HCT116 (cell line): ENCODE measurements at regions of chr4 and their contacts with region 1.

Region 1: DNA sequence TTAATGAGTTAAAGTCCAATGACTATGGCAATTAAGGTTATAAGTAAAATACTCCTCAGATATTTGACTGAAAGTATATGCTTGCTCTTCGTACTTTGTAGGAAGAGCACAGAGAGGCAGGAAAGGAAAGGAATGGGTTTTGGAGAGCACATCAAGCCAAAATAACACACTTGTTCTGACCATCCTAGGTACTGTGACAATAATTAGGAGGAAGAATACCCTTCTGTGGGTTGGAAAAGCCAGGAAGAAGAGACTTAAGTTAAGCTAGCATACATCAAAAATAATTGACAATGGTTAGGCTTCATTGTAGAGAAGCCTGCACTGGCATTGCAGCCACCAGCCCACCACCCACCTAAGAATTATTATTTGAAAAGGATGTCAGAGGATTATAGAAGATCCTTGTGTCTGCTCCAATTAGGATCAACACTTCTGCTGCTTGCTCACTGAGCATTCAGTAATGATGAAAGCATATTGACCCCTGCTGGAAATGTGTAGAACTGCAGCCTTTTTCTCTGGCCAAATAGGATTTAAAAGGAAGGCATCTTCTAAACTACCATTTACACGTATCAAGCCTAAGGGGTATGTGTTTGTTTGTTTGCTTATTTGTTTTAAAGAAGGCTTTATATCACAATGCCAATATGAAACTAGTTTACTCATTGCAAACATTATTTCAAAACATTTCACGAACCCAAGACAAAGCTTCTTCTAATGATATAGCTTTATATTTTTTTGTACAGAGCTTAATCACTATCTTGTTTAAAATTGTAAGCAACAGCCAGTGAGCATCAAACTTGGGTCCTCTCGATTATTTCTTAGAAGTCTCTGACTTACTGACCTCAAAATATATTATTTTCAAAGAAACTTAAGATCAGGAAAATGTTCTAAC is 286.2 kb upstream of the TET2 start:
- DNase-seq: peak; percentile 76
- ATAC-seq: peak; percentile 78
- H3K4me3 ChIP-seq: no peak overlapping the region
- H3K27ac ChIP-seq: no peak overlapping the region
- H3K4me1 ChIP-seq: no peaks in the 10 kb centered on the region
- H3K27me3 ChIP-seq: no peaks in the 10 kb centered on the region
- CTCF ChIP-seq: peak; percentile 69 to 92 (median 74); a peak in 5 of 6 replicates
- POLR2A ChIP-seq: no peak
- RAD21 ChIP-seq: peak; percentile 92

Region 2: DNA sequence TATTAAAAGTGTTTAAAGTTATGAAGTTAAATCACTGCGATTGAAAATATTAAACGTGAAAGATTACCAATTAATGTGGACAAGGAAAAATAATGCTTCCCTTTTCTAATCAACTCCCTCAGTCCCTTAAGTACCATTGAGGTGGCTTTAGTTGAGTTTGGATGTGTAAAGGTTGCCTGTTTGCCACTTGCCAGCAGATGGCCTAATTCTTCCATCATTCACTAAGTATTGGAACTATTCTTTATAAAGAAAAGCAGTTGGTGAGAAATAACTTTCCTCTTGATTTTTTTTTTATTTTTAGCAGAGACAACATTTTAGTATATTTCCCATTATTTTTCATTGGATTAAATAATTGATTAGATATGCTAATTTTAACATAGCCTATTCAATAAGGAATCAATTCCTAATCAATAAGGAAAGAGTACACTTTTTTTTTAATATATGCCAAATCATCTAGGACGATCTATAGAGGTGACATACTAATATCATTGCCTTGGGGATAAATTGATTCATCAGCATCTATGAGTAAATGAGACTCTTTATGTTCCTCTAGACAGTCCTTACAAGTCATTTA is 844.7 kb before region 1 on chr4:
- CTCF ChIA-PET with region 1: no interaction called
- POLR2A ChIA-PET with region 1: no interaction called
- RAD21 ChIA-PET with region 1: no interaction called
- intact Hi-C with region 1: loop called (anchors 2 kb)
- DNase-seq: peak; percentile 28
- ATAC-seq: peak; percentile 63; the same call in 1 of the 2 replicates
- H3K4me3 ChIP-seq: no peak overlapping the region
- H3K27ac ChIP-seq: no peak overlapping the region
- H3K4me1 ChIP-seq: no peaks in the 10 kb centered on the region
- H3K27me3 ChIP-seq: no peaks in the 10 kb centered on the region
- CTCF ChIP-seq: peak in 2 of 3 experiments; percentile 42 to 58; a peak in 4 of 6 replicates
- POLR2A ChIP-seq: no peak
- RAD21 ChIP-seq: peak; percentile 69

Region 3: GRCh38 chr4:104064646-104065577 is 795.6 kb before region 1 on chr4:
- CTCF ChIA-PET with region 1: interaction called, 8 read pairs
- POLR2A ChIA-PET with region 1: no interaction called
- RAD21 ChIA-PET with region 1: interaction called in 1 of 2 experiments, 3 read pairs
- intact Hi-C with region 1: loop called (anchors 1 kb)
- DNase-seq: peak; percentile 56
- ATAC-seq: peak; percentile 96
- H3K4me3 ChIP-seq: no peak overlapping the region
- H3K27ac ChIP-seq: no peak overlapping the region
- H3K4me1 ChIP-seq: no peaks in the 10 kb centered on the region
- H3K27me3 ChIP-seq: no peaks in the 10 kb centered on the region
- CTCF ChIP-seq: peak; percentile 63 to 81 (median 64)
- POLR2A ChIP-seq: no peak
- RAD21 ChIP-seq: peak; percentile 85

Region 4: GRCh38 chr4:104693599-104694201 is 166.8 kb before region 1 on chr4:
- CTCF ChIA-PET with region 1: no interaction called
- POLR2A ChIA-PET with region 1: no interaction called
- RAD21 ChIA-PET with region 1: no interaction called
- intact Hi-C with region 1: loop called (anchors 2 kb)
- DNase-seq: peak; percentile 26
- ATAC-seq: peak; percentile 58; the same call in 1 of the 2 replicates
- H3K4me3 ChIP-seq: no peak overlapping the region
- H3K27ac ChIP-seq: no peak overlapping the region
- H3K4me1 ChIP-seq: no peaks in the 10 kb centered on the region
- H3K27me3 ChIP-seq: no peaks in the 10 kb centered on the region
- CTCF ChIP-seq: peak; percentile 39 to 76 (median 67); a peak in 5 of 6 replicates
- POLR2A ChIP-seq: no peak
- RAD21 ChIP-seq: peak; percentile 51